ENCODE measurements at regions of chr14 and their contacts with region 1.

Region 1: DNA sequence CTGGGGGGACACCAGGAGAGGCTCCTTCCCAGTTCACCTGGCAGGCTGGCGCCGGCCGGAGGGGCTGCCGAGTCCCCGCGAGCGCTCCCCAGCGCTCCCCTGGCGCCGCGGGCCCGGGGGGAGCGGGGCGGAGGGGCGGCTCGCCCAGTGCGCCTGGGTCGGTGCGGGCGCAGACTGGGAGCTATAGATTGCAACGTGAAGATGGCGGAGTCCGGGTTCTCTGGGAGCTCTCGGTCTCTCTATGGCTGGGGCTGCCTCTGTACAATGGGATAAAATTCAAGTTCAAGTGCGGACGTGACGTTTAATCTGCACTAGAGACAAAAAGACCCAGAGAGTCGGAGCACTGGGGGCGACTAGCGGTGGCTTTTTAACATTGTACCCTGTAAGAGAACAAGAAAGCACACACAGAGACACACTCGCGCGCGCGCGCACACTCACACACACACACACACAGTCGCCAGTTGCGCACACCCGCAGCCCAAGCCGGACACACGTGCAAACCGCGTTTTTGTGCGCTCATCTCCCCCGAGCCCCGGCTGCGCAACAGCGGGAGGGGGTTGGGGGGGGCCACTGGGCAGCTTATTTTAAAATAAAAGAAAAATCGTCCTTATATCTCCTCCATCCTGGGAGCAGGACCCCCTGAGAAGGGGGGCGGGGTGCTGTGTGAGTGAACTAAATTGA is at the start of gene BCL11B:
- DNase-seq: peak; percentile 82
- H3K4me3 ChIP-seq: peak within 1 kb of the TSS; percentile 42 to 67 (median 57)
- H3K27ac ChIP-seq: peak within 1 kb of the TSS; percentile 77 to 87 (median 82)
- H3K4me1 ChIP-seq: peaks cover 12 to 44% (median 43%) of the 10 kb centered on the region in 4 donors
- H3K27me3 ChIP-seq: peaks cover 81% of the 10 kb centered on the region
- CTCF ChIP-seq: peak in 4 of 5 experiments; percentile 30 to 58 (median 50)
- EP300 ChIP-seq: no peak
- POLR2A ChIP-seq: peak; percentile 48
- total RNA-seq, gene BCL11B: 0.37 to 4.8 (median 3.7) TPM

Region 2: GRCh38 chr14:97978341-97978740 is 1293.8 kb before region 1 on chr14:
- in situ Hi-C with region 1: loop called in 1 of 4 experiments (anchors 25 kb)
- intact Hi-C with region 1: no loop called
- DNase-seq: peak; percentile 78
- H3K4me3 ChIP-seq: peak overlapping the region in 3 of 4 donors; percentile 22 to 44 (median 26)
- H3K27ac ChIP-seq: peak overlapping the region; percentile 75 to 84 (median 81)
- H3K4me1 ChIP-seq: peaks cover 0 to 36% (median 20%) of the 10 kb centered on the region in 4 donors
- H3K27me3 ChIP-seq: no peaks in the 10 kb centered on the region
- CTCF ChIP-seq: peak in 4 of 5 experiments; percentile 29 to 46 (median 35)
- EP300 ChIP-seq: no peak
- POLR2A ChIP-seq: no peak

Region 3: DNA sequence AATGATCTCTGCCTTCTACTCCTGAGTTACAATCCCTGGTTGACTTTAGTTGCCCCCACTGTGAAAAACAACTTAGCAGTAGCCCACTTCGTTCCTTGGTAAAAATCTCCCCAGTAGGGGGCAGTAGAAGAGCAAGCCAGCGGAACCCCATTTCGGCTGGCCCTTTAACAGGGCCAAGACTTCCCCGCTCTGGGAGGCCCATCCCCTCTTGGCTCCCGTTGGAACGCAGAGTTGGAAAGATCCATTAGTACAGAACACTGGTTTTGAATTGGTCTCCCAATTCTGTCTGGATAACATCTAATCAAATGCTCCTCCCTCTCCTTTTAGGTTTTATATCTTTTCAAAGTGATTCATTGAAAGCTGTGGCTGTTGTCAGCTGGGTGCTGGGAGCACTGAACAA is 1133.4 kb before region 1 on chr14:
- in situ Hi-C with region 1: loop called in 2 of 4 experiments (anchors 25 kb)
- intact Hi-C with region 1: no loop called
- DNase-seq: peak; percentile 10
- H3K4me3 ChIP-seq: no peak overlapping the region
- H3K27ac ChIP-seq: no peak overlapping the region
- H3K4me1 ChIP-seq: no peaks in the 10 kb centered on the region
- H3K27me3 ChIP-seq: peaks cover 41% of the 10 kb centered on the region
- CTCF ChIP-seq: peak; percentile 46 to 61 (median 53)
- EP300 ChIP-seq: no peak
- POLR2A ChIP-seq: no peak

Region 4: GRCh38 chr14:98173305-98173704 is 1098.8 kb before region 1 on chr14:
- in situ Hi-C with region 1: loop called in 1 of 4 experiments (anchors 25 kb)
- intact Hi-C with region 1: no loop called
- DNase-seq: peak; percentile 55
- H3K4me3 ChIP-seq: no peak overlapping the region
- H3K27ac ChIP-seq: peak overlapping the region in 1 of 4 donors; percentile 6
- H3K4me1 ChIP-seq: no peaks in the 10 kb centered on the region
- H3K27me3 ChIP-seq: no peaks in the 10 kb centered on the region
- CTCF ChIP-seq: no peak
- EP300 ChIP-seq: no peak
- POLR2A ChIP-seq: no peak

Region 5: DNA sequence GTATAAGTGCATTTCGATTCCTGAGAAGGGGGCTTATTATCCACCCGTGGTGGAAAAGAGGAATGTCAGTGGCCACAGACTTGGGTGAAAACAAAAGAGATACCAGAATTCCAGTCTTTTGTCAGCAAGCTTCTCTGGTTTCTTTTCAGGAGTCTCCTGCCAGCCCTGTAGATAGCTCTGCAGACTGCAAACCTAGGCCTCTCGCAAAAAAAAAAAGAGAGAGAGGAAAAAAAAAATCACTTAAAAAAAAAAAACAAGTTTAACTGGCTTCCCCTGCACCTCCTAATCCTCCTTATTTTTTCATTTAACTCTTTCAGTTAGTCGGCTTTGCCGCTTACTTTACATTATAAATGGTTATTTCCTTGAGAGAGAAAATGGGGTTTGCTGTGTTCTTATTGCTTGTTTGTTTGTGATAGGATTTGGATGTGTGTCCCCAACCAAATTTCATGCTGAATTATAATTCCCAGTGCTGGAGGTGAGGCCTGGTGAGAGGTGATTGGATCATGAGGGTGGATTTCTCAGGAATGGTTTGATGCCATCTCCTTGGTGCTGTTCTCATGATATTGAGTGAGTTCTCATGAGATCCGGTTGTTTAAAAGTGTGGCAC is 170.1 kb before region 1 on chr14:
- in situ Hi-C with region 1: no loop called
- intact Hi-C with region 1: no loop called
- DNase-seq: no peak
- H3K4me3 ChIP-seq: no peak overlapping the region
- H3K27ac ChIP-seq: no peak overlapping the region
- H3K4me1 ChIP-seq: no peaks in the 10 kb centered on the region
- H3K27me3 ChIP-seq: no peaks in the 10 kb centered on the region
- CTCF ChIP-seq: no peak
- EP300 ChIP-seq: no peak
- POLR2A ChIP-seq: no peak

Measured in transverse colon (tissue), 4 donors.